Mammary epithelial cell (primary cell): ENCODE measurements at regions of chr10 and their contacts with region 1.

Region 1: DNA sequence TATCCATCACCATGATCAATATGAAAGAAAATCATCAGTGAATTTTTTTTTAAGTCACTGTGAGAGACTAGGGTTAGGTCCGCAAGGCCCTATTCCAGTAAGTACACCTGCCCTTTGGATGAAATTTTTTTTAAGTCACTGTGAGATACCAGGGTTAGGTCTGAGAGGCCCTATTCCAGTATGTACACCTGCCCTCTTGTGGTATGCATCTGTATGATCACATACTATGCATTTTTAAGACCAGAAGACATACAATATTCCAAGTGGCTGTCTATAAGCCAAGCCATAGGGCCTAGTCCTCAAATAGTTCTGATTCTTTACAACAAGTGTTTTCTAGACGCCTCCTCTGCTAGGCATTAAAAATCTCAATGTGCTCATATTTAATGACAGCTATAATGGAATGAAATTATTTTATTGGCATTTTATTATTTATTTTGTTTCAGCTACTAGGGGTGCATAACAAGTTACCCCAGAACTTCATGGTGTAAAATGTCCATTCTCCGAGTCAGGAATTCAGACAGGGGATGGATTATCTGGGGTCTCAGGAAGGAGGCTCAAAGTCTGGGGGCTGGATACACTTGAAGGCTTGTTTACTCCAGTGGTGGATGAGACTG is 53.1 kb downstream of the TEX36 start:
- DNase-seq: peak; percentile 46
- H3K4me3 ChIP-seq: no peak overlapping the region
- H3K27ac ChIP-seq: no peak overlapping the region
- H3K4me1 ChIP-seq: no peaks in the 10 kb centered on the region
- H3K27me3 ChIP-seq: no peaks in the 10 kb centered on the region
- CTCF ChIP-seq: peak; percentile 56 to 78

Region 2: GRCh38 chr10:125689955-125690569 is 60.2 kb after region 1 on chr10:
- CTCF ChIA-PET with region 1: no interaction called
- dilution Hi-C with region 1: no loop called
- in situ Hi-C with region 1: no loop called
- intact Hi-C with region 1: loop called (anchors 5 kb)
- DNase-seq: no peak
- H3K4me3 ChIP-seq: no peak overlapping the region
- H3K27ac ChIP-seq: no peak overlapping the region
- H3K4me1 ChIP-seq: peaks cover 19% of the 10 kb centered on the region
- H3K27me3 ChIP-seq: no peaks in the 10 kb centered on the region
- CTCF ChIP-seq: no peak

Region 3: DNA sequence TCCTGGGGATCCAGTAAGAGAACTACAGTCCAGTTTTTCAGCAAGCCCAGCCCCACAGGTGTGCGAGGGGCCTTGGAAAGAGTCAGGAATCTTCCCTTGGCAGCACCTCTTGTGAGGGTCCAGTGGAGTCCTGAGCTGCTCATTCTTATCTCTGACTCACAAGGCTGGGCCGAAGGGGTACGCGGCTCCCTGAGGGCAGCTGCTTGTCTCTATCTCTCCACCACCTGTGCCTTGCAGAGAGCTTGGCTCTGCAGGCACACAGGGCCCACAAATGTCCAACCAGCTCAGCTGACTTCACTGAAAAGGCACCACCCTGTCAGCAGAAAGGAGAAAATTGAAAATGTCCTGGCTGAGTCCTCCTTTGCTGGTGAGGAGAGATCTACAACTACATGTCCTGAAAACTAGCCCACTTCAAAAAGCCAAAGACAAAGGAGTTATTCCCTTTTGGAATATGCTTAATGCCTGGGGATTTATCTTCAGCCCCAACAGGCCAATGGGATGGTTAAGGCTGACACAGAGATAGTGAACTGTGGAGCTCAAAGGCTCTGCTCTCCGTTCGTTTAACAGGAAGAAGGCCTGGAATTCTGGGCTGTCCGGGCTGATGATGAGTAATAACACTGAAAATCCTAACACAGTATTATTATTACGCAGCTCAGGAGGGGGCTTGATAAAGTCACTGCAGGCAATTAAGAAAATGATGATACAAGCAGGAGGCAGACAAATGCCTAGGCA is 169.7 kb after region 1 on chr10:
- CTCF ChIA-PET with region 1: no interaction called
- dilution Hi-C with region 1: no loop called
- in situ Hi-C with region 1: no loop called
- intact Hi-C with region 1: no loop called
- DNase-seq: no peak
- H3K4me3 ChIP-seq: no peak overlapping the region
- H3K27ac ChIP-seq: no peak overlapping the region
- H3K4me1 ChIP-seq: peaks cover 16% of the 10 kb centered on the region
- H3K27me3 ChIP-seq: no peaks in the 10 kb centered on the region
- CTCF ChIP-seq: no peak